PC-3 (cell line): ENCODE measurements at regions of chr9 and their contacts with region 1.

Region 1: DNA sequence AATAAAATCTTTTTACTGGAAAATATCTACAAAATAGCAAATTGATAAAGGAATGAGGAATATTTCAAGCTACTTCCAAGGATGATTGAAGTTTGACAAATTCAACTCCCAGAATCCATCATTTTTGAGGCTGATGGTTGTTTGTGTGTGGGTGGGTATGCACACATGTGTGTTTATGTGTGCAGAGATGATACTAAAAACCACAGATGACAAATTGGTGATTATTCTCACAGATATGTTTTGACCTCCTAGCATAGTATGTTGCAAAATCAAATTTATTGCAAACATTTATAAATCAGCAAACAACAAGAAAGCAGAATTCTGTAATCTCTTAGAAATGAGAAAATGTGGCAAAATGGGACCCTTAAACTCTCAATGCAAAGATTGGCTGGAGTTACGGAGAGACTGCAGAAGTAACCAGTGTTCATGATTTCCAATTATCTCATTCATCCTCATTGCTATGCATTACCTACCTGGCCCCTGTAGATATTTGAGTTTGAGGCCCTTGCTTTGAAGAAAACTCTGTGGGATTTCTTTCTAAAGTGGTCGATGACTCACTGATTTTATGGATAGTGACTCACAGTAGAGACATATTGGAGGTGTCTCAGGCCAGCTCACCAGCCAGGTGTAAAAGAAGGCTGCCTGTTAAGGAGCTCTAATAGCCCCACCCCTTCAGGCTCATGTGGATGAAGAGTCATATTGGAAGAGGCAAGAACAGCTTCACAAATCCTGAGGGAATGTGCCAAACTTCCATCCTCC is 44.6 kb upstream of the TMC1 start:
- DNase-seq: peak; percentile 97
- ATAC-seq: peak; percentile 91
- H3K4me3 ChIP-seq: no peak overlapping the region
- H3K27ac ChIP-seq: peak overlapping the region; percentile 58
- H3K4me1 ChIP-seq: peaks cover 45% of the 10 kb centered on the region
- H3K27me3 ChIP-seq: no peaks in the 10 kb centered on the region
- CTCF ChIP-seq: no peak

Region 2: GRCh38 chr9:72364679-72365524 is 111.9 kb before region 1 on chr9 and contains the start of gene ZFAND5:
- CTCF ChIA-PET with region 1: no interaction called
- POLR2A ChIA-PET with region 1: interaction called, 3 read pairs
- intact Hi-C with region 1: loop called (anchors 1 kb)
- DNase-seq: peak; percentile 93
- ATAC-seq: peak; percentile 85
- H3K4me3 ChIP-seq: peak within 1 kb of the TSS; percentile 98
- H3K27ac ChIP-seq: peak within 1 kb of the TSS; percentile 98
- H3K4me1 ChIP-seq: peaks cover 19% of the 10 kb centered on the region; the same call in 1 of the 2 replicates
- H3K27me3 ChIP-seq: no peaks in the 10 kb centered on the region
- CTCF ChIP-seq: no peak
- total RNA-seq, gene ZFAND5: 84.1 and 88.8 TPM in 2 replicates

Region 3: GRCh38 chr9:72443855-72444254 is 32.9 kb before region 1 on chr9:
- CTCF ChIA-PET with region 1: no interaction called
- POLR2A ChIA-PET with region 1: no interaction called
- intact Hi-C with region 1: loop called (anchors 2 kb)
- DNase-seq: peak; percentile 57
- ATAC-seq: peak; percentile 41
- H3K4me3 ChIP-seq: no peak overlapping the region
- H3K27ac ChIP-seq: peak overlapping the region; percentile 83
- H3K4me1 ChIP-seq: peaks cover 55% of the 10 kb centered on the region
- H3K27me3 ChIP-seq: no peaks in the 10 kb centered on the region
- CTCF ChIP-seq: no peak

Region 4: GRCh38 chr9:72509635-72510034 is 32.8 kb after region 1 on chr9:
- CTCF ChIA-PET with region 1: no interaction called
- POLR2A ChIA-PET with region 1: no interaction called
- intact Hi-C with region 1: loop called (anchors 5 kb)
- DNase-seq: peak; percentile 44
- ATAC-seq: peak; percentile 51
- H3K4me3 ChIP-seq: no peak overlapping the region
- H3K27ac ChIP-seq: peak overlapping the region; percentile 58
- H3K4me1 ChIP-seq: peaks cover 19% of the 10 kb centered on the region
- H3K27me3 ChIP-seq: no peaks in the 10 kb centered on the region
- CTCF ChIP-seq: no peak

Region 5: DNA sequence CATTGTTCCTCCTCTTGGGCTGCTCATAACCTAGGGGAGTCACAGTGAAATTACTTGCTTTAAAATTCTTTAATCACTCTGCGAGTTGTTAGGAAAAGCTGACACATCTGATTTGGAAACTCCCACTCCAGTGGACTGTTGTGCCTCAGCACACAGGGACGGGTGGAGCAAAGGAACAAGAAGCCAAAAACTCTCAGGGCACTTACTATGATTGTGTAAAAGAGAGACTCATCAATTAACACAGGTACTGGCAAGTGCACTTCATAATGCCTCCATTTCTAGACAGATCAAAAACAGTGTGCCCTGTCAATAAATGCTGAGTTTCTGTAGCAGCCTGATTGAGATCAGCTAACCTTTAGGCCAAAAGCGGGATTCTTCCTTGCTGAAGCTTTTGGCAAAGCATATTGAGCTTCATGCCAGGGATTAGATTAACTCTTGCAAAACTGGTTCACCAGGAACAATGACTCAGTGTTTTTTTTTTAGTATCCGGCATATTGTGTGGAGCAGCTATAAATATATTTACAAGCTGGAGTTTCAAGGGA is 100.5 kb after region 1 on chr9:
- CTCF ChIA-PET with region 1: no interaction called
- POLR2A ChIA-PET with region 1: no interaction called
- intact Hi-C with region 1: loop called (anchors 2 kb)
- DNase-seq: peak; percentile 93
- ATAC-seq: peak; percentile 27
- H3K4me3 ChIP-seq: peak overlapping the region; percentile 33
- H3K27ac ChIP-seq: peak overlapping the region; percentile 94
- H3K4me1 ChIP-seq: peaks cover 71% of the 10 kb centered on the region
- H3K27me3 ChIP-seq: no peaks in the 10 kb centered on the region
- CTCF ChIP-seq: no peak

Region 6: DNA sequence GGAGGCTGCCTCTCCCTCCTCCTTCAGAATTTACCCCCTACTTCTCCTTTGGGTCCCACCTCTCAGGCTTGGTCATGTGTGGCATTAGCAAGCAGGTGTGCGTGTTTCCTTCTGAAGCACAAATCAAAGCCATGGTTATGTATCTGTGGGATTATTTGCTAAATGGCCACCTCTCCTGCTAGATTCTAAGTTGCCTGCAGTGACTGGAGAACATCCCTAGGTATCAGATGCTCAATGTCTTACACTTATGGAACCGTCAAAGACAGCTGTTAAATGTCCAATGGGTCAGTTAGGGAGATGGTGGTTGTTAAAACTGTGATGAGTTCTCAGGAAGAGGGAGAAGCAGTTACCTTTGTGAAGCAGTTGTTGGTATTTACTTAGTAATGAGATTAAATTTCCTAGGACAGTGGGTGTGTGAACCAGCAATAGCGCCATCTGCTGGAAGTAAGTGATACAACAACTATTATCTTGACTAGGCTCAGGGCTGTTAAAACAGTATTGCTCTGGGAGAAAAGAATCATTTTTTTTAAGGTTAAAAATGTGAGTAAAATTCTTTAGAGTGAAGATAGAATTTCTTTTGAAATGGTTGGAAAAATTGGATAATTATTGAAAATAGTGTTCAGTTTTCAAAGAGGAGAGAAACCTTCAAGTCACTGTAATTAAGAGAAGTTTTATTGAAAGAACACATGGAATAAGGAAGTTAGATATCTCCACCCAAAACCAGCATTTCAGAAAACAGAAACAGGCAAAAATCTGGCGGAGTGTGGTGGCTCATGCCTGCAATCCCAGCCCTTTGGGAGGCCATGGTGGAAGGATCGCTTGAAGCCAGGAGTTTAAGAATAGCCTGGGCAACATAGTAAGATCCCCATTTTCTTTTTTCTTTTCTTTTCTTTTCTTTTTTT is 116.0 kb after region 1 on chr9:
- CTCF ChIA-PET with region 1: no interaction called
- POLR2A ChIA-PET with region 1: no interaction called
- intact Hi-C with region 1: loop called (anchors 5 kb)
- DNase-seq: peak; percentile 66
- ATAC-seq: peak; percentile 75
- H3K4me3 ChIP-seq: no peak overlapping the region
- H3K27ac ChIP-seq: no peak overlapping the region
- H3K4me1 ChIP-seq: peaks cover 4% of the 10 kb centered on the region; the same call in 1 of the 2 replicates
- H3K27me3 ChIP-seq: no peaks in the 10 kb centered on the region
- CTCF ChIP-seq: peak; percentile 81

Region 7: GRCh38 chr9:72718503-72718902 is 241.7 kb after region 1 on chr9:
- CTCF ChIA-PET with region 1: no interaction called
- POLR2A ChIA-PET with region 1: no interaction called
- intact Hi-C with region 1: no loop called
- DNase-seq: no peak
- ATAC-seq: no peak
- H3K4me3 ChIP-seq: no peak overlapping the region
- H3K27ac ChIP-seq: no peak overlapping the region
- H3K4me1 ChIP-seq: no peaks in the 10 kb centered on the region
- H3K27me3 ChIP-seq: no peaks in the 10 kb centered on the region
- CTCF ChIP-seq: no peak